ENCODE measurements at regions of chr14 and their contacts with region 1.

Region 1: DNA sequence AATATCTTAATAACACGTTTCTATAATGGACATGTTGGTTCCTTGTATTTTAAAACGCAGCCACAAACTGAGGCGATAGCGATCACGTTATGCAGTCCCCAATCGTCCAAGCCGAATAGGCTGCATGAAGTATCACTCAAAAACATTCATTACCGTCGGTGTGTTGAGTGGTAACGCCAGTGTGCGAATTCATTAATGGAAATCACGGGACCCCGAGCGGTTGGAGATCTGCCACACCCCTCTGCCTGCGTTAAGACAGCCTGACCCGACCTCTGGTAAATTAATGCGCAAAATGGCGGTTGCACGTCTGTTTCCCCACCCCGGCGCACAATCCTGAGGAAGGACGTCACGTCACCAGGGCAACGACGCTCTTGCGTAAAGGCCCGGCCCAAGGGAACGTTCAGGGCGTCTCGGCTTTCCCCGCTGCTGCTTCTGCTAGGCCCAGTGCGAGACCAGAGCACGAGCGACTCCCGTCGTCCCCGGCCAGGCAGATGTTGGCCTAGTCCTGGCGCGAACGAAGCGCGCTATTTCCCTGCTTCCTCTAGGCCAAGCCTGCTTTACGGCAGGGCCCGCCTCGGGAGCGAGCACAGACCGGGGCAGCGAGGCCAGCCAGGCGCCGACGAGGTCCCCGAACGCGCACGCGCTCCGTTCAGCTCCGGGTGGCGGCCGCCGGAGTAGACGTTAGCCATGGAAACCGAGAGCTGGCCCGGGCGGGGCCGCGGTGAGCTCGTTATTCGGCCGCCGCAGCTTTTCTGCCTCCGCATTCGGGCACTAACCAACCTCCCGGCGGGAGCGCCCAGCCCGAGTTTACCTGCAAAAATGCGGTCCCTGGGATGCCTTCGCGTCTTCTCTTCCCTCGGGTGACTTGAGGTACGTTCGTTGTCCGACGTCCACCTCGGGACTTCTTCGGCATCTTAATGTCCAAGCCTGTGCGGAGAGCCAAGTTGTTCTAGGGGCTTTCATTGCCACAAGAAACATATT is at the start of gene PCNX4:
- DNase-seq: peak; percentile 99 to 100 (median 99)
- H3K4me3 ChIP-seq: peak within 1 kb of the TSS; percentile 77 to 99 (median 97)
- H3K27ac ChIP-seq: peak within 1 kb of the TSS; percentile 97 to 99
- H3K4me1 ChIP-seq: peaks cover 3 to 25% (median 19%) of the 10 kb centered on the region in 4 experiments
- H3K27me3 ChIP-seq: no peaks in the 10 kb centered on the region

Region 2: GRCh38 chr14:60079724-60080123 is 12.1 kb before region 1 on chr14:
- CTCF ChIA-PET with region 1: interaction called, 10 read pairs
- POLR2A ChIA-PET with region 1: interaction called, 4 read pairs
- DNase-seq: peak in 2 of 3 donors; percentile 8 to 9
- H3K4me3 ChIP-seq: no peak overlapping the region
- H3K27ac ChIP-seq: no peak overlapping the region
- H3K4me1 ChIP-seq: no peaks in the 10 kb centered on the region
- H3K27me3 ChIP-seq: no peaks in the 10 kb centered on the region